Transverse colon (tissue), 4 donors: ENCODE measurements at regions of chr20 and their contacts with region 1.

Region 1: DNA sequence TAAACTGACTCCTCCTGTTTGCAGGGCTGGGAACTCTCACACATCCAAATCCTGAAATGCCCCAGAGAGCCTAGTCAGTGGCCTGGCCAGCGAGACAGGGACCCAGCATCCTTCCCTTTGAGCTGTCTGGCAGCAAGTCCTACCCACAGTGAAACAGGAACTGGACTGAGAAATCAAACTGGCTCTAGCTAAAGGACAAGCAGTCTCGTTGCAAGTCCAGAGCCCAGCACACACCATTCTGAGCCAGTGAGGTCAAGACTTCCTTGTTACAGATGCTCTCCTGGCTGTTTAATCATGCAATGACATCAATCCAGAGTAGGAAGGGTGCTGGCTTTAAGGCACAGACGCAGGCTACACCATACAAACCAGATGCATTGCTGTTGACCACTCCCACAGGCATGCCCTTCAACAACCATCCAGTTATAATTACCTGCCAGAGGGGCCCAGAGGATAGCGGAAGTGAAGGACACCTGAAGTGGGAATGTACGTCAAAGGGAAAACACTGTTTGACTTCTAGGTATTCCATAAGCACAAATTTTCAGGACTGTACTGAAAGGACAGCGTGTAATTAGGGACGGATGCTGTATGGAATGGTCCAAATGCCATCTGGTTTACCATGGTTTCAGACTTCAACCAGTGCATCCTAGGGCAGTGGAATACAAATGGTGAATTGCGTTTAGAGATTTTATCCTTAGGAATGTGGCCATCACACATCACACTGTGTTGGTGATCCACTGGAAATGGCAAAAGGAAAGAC is 114.4 kb downstream of the SLC23A2 start:
- DNase-seq: no peak
- H3K4me3 ChIP-seq: no peak overlapping the region
- H3K27ac ChIP-seq: no peak overlapping the region
- H3K4me1 ChIP-seq: no peaks in the 10 kb centered on the region
- H3K27me3 ChIP-seq: no peaks in the 10 kb centered on the region
- CTCF ChIP-seq: no peak
- EP300 ChIP-seq: no peak
- POLR2A ChIP-seq: no peak

Region 2: DNA sequence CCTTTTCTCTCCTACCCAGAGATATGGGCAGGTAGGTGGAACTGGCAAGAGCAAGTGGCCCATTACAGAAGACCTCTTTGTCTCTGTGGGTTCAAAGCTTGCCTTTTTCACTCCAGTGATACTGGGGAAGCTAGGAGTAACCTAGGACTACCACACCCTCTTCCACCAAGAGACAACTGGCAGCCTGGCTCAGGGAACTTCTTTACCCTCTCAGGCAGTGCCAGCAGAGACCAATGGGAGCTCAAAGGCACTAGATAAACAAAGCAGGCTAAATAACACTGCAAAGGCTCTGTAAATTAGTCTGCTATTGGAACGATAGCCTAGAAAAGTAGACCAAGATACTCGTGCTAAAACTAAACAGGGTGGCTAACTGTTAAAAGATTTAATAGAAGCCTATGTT is 1384.1 kb before region 1 on chr20:
- in situ Hi-C with region 1: no loop called
- intact Hi-C with region 1: loop called (anchors 5 kb)
- DNase-seq: no peak
- H3K4me3 ChIP-seq: no peak overlapping the region
- H3K27ac ChIP-seq: no peak overlapping the region
- H3K4me1 ChIP-seq: no peaks in the 10 kb centered on the region
- H3K27me3 ChIP-seq: no peaks in the 10 kb centered on the region
- CTCF ChIP-seq: no peak
- EP300 ChIP-seq: no peak
- POLR2A ChIP-seq: no peak

Region 3: GRCh38 chr20:4174909-4175308 is 712.0 kb before region 1 on chr20:
- in situ Hi-C with region 1: no loop called
- intact Hi-C with region 1: loop called (anchors 5 kb)
- DNase-seq: no peak
- H3K4me3 ChIP-seq: no peak overlapping the region
- H3K27ac ChIP-seq: no peak overlapping the region
- H3K4me1 ChIP-seq: peaks cover 7 to 16% (median 10%) of the 10 kb centered on the region in 4 donors
- H3K27me3 ChIP-seq: no peaks in the 10 kb centered on the region
- CTCF ChIP-seq: no peak
- EP300 ChIP-seq: no peak
- POLR2A ChIP-seq: no peak

Region 4: DNA sequence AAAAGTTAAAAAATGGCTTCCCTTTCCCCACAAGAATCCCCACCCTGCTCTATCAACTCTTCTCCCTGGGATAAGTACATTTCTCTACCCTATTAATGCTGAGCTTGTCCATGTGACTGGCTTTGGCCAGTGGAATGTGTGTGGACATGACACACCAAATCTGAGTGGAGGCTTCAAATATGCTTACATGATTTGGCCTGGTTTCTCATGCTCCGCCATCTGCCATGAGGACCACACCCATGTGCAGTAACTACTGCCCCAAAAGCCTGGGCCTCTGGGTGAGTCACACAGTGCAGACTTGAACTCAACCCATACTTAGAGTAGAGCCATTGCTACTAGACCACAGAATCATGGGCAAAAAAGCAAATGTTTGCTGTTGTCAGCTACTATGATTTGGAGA is 99.9 kb before region 1 on chr20:
- in situ Hi-C with region 1: no loop called
- intact Hi-C with region 1: no loop called
- DNase-seq: no peak
- H3K4me3 ChIP-seq: no peak overlapping the region
- H3K27ac ChIP-seq: no peak overlapping the region
- H3K4me1 ChIP-seq: no peaks in the 10 kb centered on the region
- H3K27me3 ChIP-seq: no peaks in the 10 kb centered on the region
- CTCF ChIP-seq: no peak
- EP300 ChIP-seq: no peak
- POLR2A ChIP-seq: no peak

Region 5: DNA sequence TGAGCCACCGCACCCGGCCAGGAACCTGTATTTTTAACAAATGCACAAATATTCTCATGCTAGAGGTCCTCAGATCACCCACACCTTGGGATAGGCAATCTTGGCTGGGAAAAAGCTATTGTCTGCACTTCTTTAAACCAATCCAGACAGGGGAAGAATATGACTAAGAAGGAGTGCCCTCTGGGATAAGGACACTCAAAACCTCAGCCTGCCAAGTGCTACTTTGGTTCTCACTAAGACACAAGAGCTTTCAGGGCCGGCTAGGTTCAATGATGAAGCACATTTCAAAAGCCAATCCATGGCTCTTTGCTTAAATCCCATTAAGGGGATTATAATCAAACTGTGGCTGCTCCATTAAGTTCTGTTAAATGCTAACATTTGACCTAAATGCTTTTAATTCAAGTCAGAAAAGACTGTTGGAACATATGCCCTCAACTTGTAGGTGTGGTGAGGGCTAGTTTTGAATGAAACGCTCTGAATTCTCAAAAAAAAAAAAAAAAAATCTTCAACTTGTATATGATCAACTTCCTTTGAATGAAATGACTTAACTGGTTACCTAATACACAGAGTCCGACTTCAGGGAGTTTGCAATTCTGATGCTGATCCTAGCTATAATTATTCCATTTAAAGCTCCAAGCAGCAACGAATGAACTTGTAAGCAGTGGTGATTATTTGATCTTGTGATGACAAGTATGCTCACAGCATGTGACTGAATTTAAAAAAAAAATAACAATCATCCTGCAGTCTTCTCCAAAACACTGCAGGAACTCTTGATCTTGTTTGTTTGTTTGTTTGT is 57.8 kb after region 1 on chr20:
- in situ Hi-C with region 1: no loop called
- intact Hi-C with region 1: loop called (anchors 2 kb)
- DNase-seq: no peak
- H3K4me3 ChIP-seq: no peak overlapping the region
- H3K27ac ChIP-seq: no peak overlapping the region
- H3K4me1 ChIP-seq: peaks cover 0 to 32% (median 5%) of the 10 kb centered on the region in 4 donors
- H3K27me3 ChIP-seq: no peaks in the 10 kb centered on the region
- CTCF ChIP-seq: no peak
- EP300 ChIP-seq: no peak
- POLR2A ChIP-seq: no peak

Region 6: GRCh38 chr20:5090191-5090590 is 203.2 kb after region 1 on chr20:
- in situ Hi-C with region 1: no loop called
- intact Hi-C with region 1: no loop called
- DNase-seq: no peak
- H3K4me3 ChIP-seq: no peak overlapping the region
- H3K27ac ChIP-seq: peak overlapping the region in 3 of 4 donors; percentile 42 to 57 (median 42)
- H3K4me1 ChIP-seq: peaks cover 0 to 13% (median 3%) of the 10 kb centered on the region in 4 donors
- H3K27me3 ChIP-seq: no peaks in the 10 kb centered on the region
- CTCF ChIP-seq: no peak
- EP300 ChIP-seq: no peak
- POLR2A ChIP-seq: peak; percentile 23